HEK293T (cell line): ENCODE measurements at regions of chr19 and their contacts with region 1.

Region 1: GRCh38 chr19:54189735-54190502 is 539 bp upstream of the MBOAT7 start:
- DNase-seq: peak; percentile 93

Region 2: GRCh38 chr19:54137086-54137921 is 52.6 kb before region 1 on chr19 and contains the start of gene CNOT3:
- CTCF ChIA-PET with region 1: interaction called, 4 read pairs
- POLR2A ChIA-PET with region 1: interaction called, 14 read pairs
- DNase-seq: peak; percentile 96

Region 3: GRCh38 chr19:54172471-54173358 is 17.2 kb before region 1 on chr19 and contains the start of gene TMC4:
- CTCF ChIA-PET with region 1: interaction called, 3 read pairs
- POLR2A ChIA-PET with region 1: interaction called, 11 read pairs
- DNase-seq: no peak

Region 4: DNA sequence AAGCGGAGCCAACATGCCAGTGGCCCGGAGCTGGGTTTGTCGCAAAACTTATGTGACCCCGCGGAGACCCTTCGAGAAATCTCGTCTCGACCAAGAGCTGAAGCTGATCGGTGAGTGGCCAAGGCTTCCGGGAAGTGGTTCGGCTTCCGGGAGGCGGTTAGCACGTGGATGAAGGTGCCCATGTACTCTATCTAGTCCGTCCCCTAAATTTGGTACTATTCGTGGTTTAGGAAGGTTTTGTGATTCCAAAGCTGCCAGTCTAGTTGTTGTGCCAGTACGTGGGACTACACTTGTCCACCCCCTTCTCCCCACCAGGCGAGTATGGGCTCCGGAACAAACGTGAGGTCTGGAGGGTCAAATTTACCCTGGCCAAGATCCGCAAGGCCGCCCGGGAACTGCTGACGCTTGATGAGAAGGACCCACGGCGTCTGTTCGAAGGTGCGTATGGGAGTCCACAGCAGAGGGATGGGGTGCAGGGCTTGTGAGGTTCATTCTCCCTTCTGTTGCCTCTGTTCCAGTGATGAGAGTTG is 11.3 kb after region 1 on chr19:
- CTCF ChIA-PET with region 1: interaction called, 4 read pairs
- POLR2A ChIA-PET with region 1: interaction called, 76 read pairs
- DNase-seq: no peak

Region 5: DNA sequence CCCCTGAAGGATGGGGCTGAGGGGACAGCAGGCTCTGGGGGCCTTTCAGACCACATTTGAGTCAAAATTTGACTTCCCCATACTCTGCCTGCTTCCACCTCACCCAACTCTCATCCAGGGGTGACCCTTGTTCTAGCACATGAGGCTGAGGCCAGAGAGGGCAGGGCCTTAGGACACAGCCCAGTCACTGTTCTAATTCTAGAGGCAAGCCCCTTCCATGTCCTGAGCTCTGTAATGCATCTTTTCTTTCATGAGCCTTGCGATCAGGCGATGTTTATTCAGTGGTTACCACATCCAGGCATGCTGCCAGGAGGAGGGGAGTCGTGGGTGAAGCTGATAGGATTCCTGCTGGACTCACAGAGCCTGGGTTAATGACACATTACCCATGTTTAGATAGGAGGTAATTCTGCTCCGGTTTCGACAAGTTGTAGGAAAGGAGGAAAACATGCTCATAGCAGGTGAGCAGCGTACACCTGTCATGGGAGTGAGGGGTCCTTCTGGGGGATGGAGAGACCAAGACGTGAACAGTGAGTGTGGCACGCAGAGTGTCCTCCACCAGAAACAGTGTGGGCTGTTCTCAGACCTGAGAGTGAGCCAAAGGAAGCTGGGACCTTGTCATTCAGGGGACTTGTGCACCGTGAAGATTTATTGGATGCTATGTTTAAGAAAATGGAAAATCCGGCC is 20.0 kb after region 1 on chr19:
- CTCF ChIA-PET with region 1: no interaction called
- POLR2A ChIA-PET with region 1: interaction called, 46 read pairs
- DNase-seq: peak; percentile 61